ENCODE measurements at regions of chr1 and their contacts with region 1.

Region 1: DNA sequence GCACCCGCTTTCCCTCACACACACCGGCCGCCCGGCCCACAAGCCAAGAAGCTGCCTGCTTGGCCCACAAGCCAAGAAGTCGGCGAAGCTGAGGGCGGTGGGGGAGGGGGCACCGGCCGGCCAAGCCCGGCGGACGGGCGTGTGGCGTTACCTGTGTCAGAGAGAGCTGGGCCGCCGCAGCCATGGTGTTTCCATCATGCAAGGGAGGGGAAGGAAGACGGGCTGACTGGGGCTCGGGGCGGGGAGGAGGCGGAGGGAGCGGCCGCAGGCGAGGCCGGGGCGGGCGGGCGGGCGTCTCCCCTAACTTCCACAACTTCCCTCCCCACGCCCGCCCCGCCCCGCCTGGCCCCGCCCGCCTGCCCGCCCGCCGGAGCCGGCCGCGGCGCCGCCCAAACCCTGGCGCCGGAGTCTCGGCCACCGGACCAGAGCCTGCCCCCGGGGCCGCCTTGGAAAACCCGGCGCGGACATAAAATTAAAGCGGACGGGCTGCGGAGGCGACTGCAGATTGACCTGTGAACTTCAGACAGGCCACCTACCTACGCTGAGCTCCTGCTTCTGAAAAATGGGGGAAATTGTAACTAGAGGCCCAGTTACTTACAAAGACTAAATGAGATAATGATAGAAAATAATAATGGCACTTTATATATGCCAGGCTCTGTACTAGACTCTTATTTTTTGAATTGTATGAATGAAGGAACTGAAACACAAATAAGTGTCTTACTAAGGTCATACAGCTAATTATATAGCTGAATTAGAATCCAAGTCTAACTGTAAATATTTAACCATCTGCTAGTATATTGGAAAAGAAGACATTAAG is at the start of gene EPS15:
- DNase-seq: peak; percentile 95
- ATAC-seq: peak; percentile 76
- H3K4me3 Mint-ChIP-seq: peak within 1 kb of the TSS; percentile 100
- H3K27ac Mint-ChIP-seq: peak within 1 kb of the TSS; percentile 93
- H3K4me1 Mint-ChIP-seq: peaks cover 48% of the 10 kb centered on the region
- H3K27me3 Mint-ChIP-seq: no peaks in the 10 kb centered on the region
- total RNA-seq, gene EPS15: 59.6 to 61.6 TPM

Region 2: GRCh38 chr1:51235673-51236530 is 283.4 kb before region 1 on chr1 and contains the start of gene RNF11:
- CTCF ChIA-PET with region 1: no interaction called
- POLR2A ChIA-PET with region 1: no interaction called
- intact Hi-C with region 1: loop called (anchors 1 to 10 kb)
- DNase-seq: peak; percentile 97
- ATAC-seq: peak; percentile 93
- H3K4me3 Mint-ChIP-seq: peak within 1 kb of the TSS; percentile 79
- H3K27ac Mint-ChIP-seq: peak within 1 kb of the TSS; percentile 90
- H3K4me1 Mint-ChIP-seq: peaks cover 29% of the 10 kb centered on the region
- H3K27me3 Mint-ChIP-seq: no peaks in the 10 kb centered on the region
- total RNA-seq, gene RNF11: 20.6 to 26.0 TPM

Region 3: DNA sequence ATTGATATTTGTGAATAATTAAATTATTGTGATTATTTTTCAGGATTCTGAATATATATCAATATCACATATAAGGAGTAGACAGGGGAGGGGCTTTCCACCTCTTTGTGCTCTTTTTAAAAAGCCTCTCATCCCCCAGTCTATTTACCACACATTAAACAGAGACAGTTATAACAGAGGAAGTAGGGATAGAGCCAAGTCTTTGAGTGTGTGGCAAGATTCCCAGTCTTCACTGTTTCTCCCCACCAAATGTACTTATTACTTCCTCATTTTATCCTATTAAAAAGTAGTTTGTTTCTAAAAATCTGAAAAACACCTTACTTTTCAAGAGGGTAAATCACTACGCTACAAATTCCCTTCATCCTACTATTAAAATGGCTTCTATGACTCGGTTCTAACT is 46.9 kb before region 1 on chr1:
- CTCF ChIA-PET with region 1: no interaction called
- POLR2A ChIA-PET with region 1: interaction called, 3 read pairs
- intact Hi-C with region 1: loop called in 1 of 2 experiments (anchors 5 kb)
- DNase-seq: no peak
- ATAC-seq: no peak
- H3K4me3 Mint-ChIP-seq: no peak overlapping the region
- H3K27ac Mint-ChIP-seq: no peak overlapping the region
- H3K4me1 Mint-ChIP-seq: peaks cover 4% of the 10 kb centered on the region
- H3K27me3 Mint-ChIP-seq: no peaks in the 10 kb centered on the region

Region 4: GRCh38 chr1:51558360-51558924 is 39.2 kb after region 1 on chr1:
- CTCF ChIA-PET with region 1: no interaction called
- POLR2A ChIA-PET with region 1: interaction called, 3 read pairs
- intact Hi-C with region 1: loop called in 1 of 2 experiments (anchors 1 kb)
- DNase-seq: peak; percentile 42
- ATAC-seq: peak; percentile 85
- H3K4me3 Mint-ChIP-seq: no peak overlapping the region
- H3K27ac Mint-ChIP-seq: peak overlapping the region; percentile 35
- H3K4me1 Mint-ChIP-seq: peaks cover 8% of the 10 kb centered on the region
- H3K27me3 Mint-ChIP-seq: no peaks in the 10 kb centered on the region

Region 5: GRCh38 chr1:51627678-51628077 is 108.4 kb after region 1 on chr1:
- CTCF ChIA-PET with region 1: no interaction called
- POLR2A ChIA-PET with region 1: no interaction called
- intact Hi-C with region 1: no loop called
- DNase-seq: peak; percentile 16
- ATAC-seq: no peak
- H3K4me3 Mint-ChIP-seq: no peak overlapping the region
- H3K27ac Mint-ChIP-seq: no peak overlapping the region
- H3K4me1 Mint-ChIP-seq: peaks cover 21% of the 10 kb centered on the region
- H3K27me3 Mint-ChIP-seq: no peaks in the 10 kb centered on the region

Region 6: DNA sequence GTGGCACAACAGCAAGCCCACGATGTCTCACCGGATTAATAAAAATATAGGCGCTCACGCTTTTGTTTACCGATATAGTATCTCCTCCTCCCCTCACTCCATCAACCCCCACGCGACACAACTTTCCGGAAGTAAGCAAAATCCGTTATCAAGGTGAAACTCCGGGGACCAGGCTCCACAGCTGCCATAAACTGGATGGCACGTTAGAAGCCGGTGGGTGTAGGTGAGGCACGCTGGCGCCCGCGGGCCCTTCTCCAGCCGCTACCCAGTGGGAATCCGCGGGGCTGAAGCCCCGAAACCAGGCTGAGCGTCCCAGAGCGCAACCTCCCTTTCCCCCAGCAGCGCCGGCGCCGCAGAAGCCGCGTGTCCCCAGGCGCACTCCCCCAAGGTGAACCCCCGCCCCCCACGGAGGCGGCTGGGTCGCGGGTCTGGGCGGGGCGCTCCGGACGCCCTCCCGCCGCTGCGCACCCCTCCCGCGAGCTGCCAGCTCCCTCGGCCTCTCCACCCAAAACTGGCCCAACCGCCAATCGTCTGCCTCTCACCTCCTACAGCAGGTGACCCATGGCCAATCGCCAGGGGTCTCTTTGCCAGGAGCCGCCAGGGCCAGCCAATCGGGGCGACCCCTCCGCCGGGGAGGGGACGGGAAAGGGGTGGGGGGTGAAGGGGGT is 210.0 kb after region 1 on chr1:
- CTCF ChIA-PET with region 1: no interaction called
- POLR2A ChIA-PET with region 1: no interaction called
- intact Hi-C with region 1: loop called in 1 of 2 experiments (anchors 1 kb)
- DNase-seq: peak; percentile 97
- ATAC-seq: peak; percentile 97
- H3K4me3 Mint-ChIP-seq: peak overlapping the region; percentile 84
- H3K27ac Mint-ChIP-seq: peak overlapping the region; percentile 83
- H3K4me1 Mint-ChIP-seq: peaks cover 40% of the 10 kb centered on the region
- H3K27me3 Mint-ChIP-seq: no peaks in the 10 kb centered on the region

Measured in activated CD4-positive, alpha-beta T cell treated with anti-CD3 and anti-CD28 coated beads for 36 hours (primary cell).